Lower leg skin (tissue), 4 donors: ENCODE measurements at regions of chr15 and their contacts with region 1.

Region 1: GRCh38 chr15:89768060-89768500 is 8.1 kb upstream of the MESP2 start:
- DNase-seq: peak in 1 of 2 donors; percentile 85
- H3K4me3 ChIP-seq: no peak overlapping the region
- CTCF ChIP-seq: no peak
- POLR2A ChIP-seq: no peak

Region 2: GRCh38 chr15:89874926-89875564 is 107.0 kb after region 1 on chr15:
- intact Hi-C with region 1: loop called (anchors 5 kb)
- DNase-seq: peak; percentile 83 to 96
- H3K4me3 ChIP-seq: no peak overlapping the region
- CTCF ChIP-seq: peak in 1 of 3 donors; percentile 85
- POLR2A ChIP-seq: no peak